Activated CD4-positive, alpha-beta memory T cell treated with anti-CD3 and anti-CD28 coated beads, Interleukin-2, amount 10 ng/mL, durations not matched to agents 7 days and 5 days (primary cell): ENCODE measurements at regions of chr14 and their contacts with region 1.

Region 1: DNA sequence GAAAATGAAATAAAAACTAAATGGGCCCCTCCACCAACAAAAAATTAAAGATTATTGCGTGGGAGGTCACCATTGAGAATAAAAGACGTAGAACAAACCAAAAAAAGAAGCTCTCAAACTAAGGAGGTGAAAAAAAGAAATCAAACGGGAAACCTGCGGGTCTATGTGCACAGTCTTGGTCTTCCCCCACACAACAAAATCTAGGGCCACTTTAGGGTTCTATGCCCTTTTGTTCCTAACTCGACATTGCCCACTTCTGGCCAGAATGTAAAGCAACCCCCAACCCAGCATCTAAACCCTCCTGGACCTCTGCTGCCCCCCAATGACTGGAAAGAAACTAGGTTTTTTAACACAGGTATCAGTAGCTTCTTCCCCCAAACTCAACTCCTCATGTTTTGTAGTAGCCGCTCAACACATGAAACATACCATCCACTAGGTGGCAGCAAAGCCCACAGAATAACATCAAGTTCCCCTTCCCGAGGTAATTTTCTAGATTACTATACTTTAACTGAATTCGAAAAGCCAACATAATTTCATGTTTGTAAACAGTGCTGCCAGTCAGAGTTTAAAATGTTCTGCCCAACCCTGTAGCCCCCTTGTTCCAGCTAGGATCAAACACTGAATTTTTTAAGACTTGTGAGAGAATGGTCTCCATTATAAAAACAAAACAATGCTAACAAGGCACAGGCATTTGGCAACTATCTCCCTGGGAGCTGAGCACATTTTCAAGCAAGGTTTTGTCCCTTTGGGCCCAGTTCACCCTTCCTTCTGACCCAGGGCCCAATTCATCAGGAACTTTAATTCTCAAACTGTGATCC is 18.7 kb downstream of the DAD1 start:
- DNase-seq: peak; percentile 91
- H3K4me3 Mint-ChIP-seq: peak overlapping the region; percentile 82
- H3K27ac Mint-ChIP-seq: peak overlapping the region; percentile 95
- H3K4me1 Mint-ChIP-seq: peaks cover 70% of the 10 kb centered on the region
- H3K27me3 Mint-ChIP-seq: no peaks in the 10 kb centered on the region

Region 2: GRCh38 chr14:21846227-21846885 is 724.0 kb before region 1 on chr14:
- CTCF ChIA-PET with region 1: interaction called, 8 read pairs
- POLR2A ChIA-PET with region 1: interaction called, 11 read pairs
- DNase-seq: peak; percentile 76
- H3K4me3 Mint-ChIP-seq: peak overlapping the region; percentile 78
- H3K27ac Mint-ChIP-seq: peak overlapping the region; percentile 82
- H3K4me1 Mint-ChIP-seq: peaks cover 10% of the 10 kb centered on the region
- H3K27me3 Mint-ChIP-seq: peaks cover 31% of the 10 kb centered on the region

Region 3: GRCh38 chr14:21978184-21978998 is 592.0 kb before region 1 on chr14:
- CTCF ChIA-PET with region 1: interaction called, 25 read pairs
- POLR2A ChIA-PET with region 1: interaction called, 8 read pairs
- DNase-seq: peak; percentile 63
- H3K4me3 Mint-ChIP-seq: peak overlapping the region; percentile 63
- H3K27ac Mint-ChIP-seq: peak overlapping the region; percentile 71
- H3K4me1 Mint-ChIP-seq: peaks cover 22% of the 10 kb centered on the region
- H3K27me3 Mint-ChIP-seq: peaks cover 16% of the 10 kb centered on the region

Region 4: DNA sequence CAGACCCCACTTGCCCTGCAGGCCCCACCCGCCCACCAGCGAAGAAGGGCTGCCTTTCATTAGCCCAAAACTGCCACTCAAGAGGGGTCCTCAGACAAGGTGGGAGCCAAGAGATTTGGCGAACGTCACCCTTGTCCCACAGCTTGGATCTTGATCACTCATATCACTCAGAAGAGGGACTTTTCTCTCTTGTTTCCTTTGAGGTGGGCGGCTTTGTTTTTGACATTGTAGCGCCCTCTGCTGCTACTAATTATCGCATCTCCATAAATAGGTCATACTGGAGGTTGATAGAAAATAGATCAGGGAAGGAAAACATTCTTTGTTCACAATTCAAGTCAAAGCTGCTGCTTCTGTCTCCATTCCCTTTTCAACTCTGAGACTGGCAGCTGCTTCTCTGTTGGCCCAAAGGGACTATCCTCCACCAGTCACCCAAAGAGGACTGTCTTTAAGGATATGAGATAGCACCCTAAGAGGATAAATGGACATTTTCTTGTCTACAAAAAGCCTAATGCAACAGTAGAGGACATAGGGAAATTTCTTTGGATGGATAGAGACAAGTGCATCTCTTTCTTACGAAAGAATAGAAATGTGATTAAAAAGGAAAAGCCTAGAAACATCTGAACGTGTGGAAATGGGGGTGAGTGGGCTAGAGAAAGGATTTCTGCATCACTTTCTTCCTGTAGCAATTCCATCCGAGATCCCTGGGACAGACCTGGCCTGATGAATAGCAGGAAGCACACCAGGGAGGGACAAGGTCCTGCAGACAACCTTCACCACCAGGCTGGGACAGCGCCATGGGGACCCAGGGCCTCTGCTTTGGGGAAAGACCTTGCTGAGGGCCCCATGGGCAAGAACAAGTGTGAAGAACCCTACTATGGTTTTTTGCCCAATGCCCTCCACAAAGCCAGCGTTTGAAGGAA is 97.1 kb before region 1 on chr14:
- CTCF ChIA-PET with region 1: no interaction called
- POLR2A ChIA-PET with region 1: no interaction called
- DNase-seq: no peak
- H3K4me3 Mint-ChIP-seq: no peak overlapping the region
- H3K27ac Mint-ChIP-seq: no peak overlapping the region
- H3K4me1 Mint-ChIP-seq: no peaks in the 10 kb centered on the region
- H3K27me3 Mint-ChIP-seq: no peaks in the 10 kb centered on the region

Region 5: DNA sequence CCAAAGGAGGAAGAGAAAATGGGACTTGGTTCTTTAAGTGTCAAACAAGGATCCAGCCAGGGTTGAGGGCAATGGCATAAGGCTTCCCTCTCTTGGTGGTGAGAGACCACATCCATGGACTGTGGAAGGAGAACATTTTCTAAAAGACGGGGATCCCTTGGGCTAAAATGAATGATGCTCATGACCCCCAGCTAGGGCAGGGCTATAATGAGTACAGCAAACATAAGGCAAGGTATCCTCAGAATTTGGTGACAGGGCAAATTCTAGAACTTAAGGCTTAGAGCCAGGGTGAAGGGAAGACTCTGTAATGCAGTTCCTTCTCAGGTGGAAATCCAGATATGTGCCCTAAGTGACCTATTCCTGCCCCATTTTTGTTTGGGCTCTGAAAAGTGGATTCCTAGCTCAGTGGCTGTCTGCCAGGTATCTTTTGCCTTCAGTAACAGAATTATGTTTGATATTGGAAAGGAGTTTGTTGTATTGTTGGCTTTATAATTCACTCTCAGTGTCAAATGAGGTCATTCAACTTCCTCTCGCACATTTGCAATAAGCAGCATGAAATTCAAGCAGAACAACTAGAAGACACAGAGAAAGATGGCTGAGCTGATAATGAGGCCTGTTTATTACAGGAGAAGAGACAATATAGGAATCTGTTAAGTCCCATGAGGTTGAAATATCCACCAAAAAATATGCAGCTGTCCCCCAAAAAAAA is 58.1 kb before region 1 on chr14:
- CTCF ChIA-PET with region 1: interaction called, 13 read pairs
- POLR2A ChIA-PET with region 1: interaction called, 1,110 read pairs
- DNase-seq: no peak
- H3K4me3 Mint-ChIP-seq: peak overlapping the region; percentile 83
- H3K27ac Mint-ChIP-seq: peak overlapping the region; percentile 90
- H3K4me1 Mint-ChIP-seq: peaks cover 92% of the 10 kb centered on the region
- H3K27me3 Mint-ChIP-seq: no peaks in the 10 kb centered on the region

Region 6: DNA sequence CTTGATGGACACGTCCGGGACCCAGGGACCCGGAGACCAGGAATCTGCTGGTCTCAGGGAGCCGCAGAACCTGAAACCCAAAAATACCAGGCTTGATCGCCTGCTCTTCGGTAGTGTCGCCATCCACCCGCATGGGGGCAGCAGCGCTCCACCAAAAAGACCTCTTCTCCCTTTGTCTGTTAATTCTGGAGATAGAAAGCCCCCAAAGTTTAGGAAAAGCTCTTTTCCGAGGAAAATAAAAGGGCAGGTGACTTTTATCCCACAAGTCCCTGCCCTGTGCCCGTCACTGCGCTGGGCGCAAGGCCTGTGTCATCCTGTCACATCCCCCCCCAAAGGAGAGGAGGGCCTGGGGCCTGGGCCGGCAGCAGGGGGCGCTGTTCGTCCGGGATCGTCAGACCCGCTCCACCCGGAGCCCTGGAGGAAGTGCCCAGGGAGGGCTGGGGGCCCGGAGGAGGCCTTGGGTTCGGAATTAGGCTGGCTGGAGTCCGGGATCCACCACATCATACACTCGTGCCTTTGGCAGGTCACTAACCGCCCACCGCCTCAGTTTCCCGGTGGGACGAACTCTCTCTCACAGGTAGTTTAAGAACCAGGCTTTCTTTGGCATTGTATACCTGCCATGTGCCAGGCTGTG is 13.2 kb before region 1 on chr14:
- CTCF ChIA-PET with region 1: interaction called, 593 read pairs
- POLR2A ChIA-PET with region 1: interaction called, 794 read pairs
- DNase-seq: peak; percentile 90
- H3K4me3 Mint-ChIP-seq: peak overlapping the region; percentile 76
- H3K27ac Mint-ChIP-seq: peak overlapping the region; percentile 95
- H3K4me1 Mint-ChIP-seq: peaks cover 90% of the 10 kb centered on the region
- H3K27me3 Mint-ChIP-seq: peaks cover 2% of the 10 kb centered on the region

Region 7: GRCh38 chr14:22822571-22823098 is 252.3 kb after region 1 on chr14:
- CTCF ChIA-PET with region 1: interaction called, 28 read pairs
- POLR2A ChIA-PET with region 1: interaction called, 5 read pairs
- DNase-seq: peak; percentile 71
- H3K4me3 Mint-ChIP-seq: peak overlapping the region; percentile 39
- H3K27ac Mint-ChIP-seq: no peak overlapping the region
- H3K4me1 Mint-ChIP-seq: peaks cover 36% of the 10 kb centered on the region
- H3K27me3 Mint-ChIP-seq: peaks cover 19% of the 10 kb centered on the region

Region 8: DNA sequence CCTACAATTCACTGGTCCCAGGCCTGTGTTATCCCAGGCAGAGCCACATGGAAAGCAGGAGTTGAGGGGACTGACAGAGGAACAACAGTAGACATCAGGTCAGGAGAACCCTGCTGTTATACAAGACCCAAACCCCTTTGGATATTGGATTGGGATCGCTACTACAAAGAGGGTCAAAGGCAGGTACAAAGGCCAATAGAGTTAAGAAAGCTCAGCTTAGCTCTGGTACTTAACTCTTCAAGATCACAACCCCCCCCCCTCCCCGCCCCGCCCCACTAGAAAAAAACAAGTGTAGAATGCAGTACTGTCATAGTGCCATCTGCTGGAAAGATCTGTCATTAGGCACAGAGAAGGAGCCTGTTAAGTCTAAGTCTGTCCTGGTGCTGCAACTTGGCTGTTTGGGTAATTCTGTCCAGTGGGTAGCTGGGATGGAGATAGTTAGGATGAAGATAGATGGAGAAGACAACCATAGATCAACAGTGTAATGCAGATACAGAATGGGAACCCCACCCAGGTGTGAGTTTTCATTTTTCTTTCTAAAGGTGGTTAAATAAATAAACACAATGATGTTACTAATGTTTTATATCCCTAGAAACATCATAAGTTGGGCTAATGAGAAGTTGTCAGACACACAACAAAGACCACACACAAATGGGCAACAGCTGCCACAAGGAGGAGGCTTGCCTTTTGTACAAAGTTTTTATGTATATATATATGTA is 329.9 kb after region 1 on chr14:
- CTCF ChIA-PET with region 1: interaction called, 27 read pairs
- POLR2A ChIA-PET with region 1: interaction called, 4 read pairs
- DNase-seq: peak; percentile 48
- H3K4me3 Mint-ChIP-seq: no peak overlapping the region
- H3K27ac Mint-ChIP-seq: peak overlapping the region; percentile 44
- H3K4me1 Mint-ChIP-seq: peaks cover 19% of the 10 kb centered on the region
- H3K27me3 Mint-ChIP-seq: no peaks in the 10 kb centered on the region